Heart right ventricle (tissue), 16 donors: ENCODE measurements at regions of chr11 and their contacts with region 1.

Region 1: DNA sequence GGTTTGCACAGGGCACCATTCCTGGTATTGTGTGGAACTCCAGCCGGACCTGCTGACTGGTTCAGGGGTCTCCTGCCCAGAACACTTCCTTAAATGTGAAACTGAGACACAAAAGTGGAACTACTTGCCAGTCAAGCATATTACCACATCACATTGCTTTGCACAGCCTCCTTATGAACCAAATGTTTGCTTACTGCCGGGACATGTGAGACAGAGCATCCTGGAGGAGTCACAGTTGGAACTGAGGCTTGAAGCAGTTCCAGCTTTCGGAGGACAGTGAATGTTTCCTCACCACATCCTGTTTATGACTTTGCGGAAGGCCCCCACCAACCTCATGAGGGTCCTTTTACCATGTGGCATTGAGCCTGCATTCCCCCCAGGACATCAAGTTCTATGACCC is 105.8 kb upstream of the ARHGAP42 start:
- DNase-seq: no peak
- ATAC-seq: no peak
- H3K4me3 ChIP-seq: no peak overlapping the region
- H3K27ac ChIP-seq: no peak overlapping the region
- H3K4me1 ChIP-seq: peaks cover 0 to 32% (median 13%) of the 10 kb centered on the region in 9 donors
- H3K27me3 ChIP-seq: no peaks in the 10 kb centered on the region
- CTCF ChIP-seq: no peak

Region 2: GRCh38 chr11:100663583-100663982 is 82.3 kb after region 1 on chr11:
- intact Hi-C with region 1: loop called in 1 of 10 experiments (anchors 10 kb)
- DNase-seq: no peak
- ATAC-seq: no peak
- H3K4me3 ChIP-seq: no peak overlapping the region
- H3K27ac ChIP-seq: no peak overlapping the region
- H3K4me1 ChIP-seq: no peaks in the 10 kb centered on the region
- H3K27me3 ChIP-seq: no peaks in the 10 kb centered on the region
- CTCF ChIP-seq: no peak

Region 3: GRCh38 chr11:100695911-100696310 is 114.6 kb after region 1 on chr11:
- intact Hi-C with region 1: no loop called
- DNase-seq: no peak
- ATAC-seq: no peak
- H3K4me3 ChIP-seq: no peak overlapping the region
- H3K27ac ChIP-seq: no peak overlapping the region
- H3K4me1 ChIP-seq: peaks cover 0 to 7% (median 0%) of the 10 kb centered on the region in 9 donors
- H3K27me3 ChIP-seq: no peaks in the 10 kb centered on the region
- CTCF ChIP-seq: no peak